ENCODE measurements at regions of chr6 and their contacts with region 1.

Region 1: DNA sequence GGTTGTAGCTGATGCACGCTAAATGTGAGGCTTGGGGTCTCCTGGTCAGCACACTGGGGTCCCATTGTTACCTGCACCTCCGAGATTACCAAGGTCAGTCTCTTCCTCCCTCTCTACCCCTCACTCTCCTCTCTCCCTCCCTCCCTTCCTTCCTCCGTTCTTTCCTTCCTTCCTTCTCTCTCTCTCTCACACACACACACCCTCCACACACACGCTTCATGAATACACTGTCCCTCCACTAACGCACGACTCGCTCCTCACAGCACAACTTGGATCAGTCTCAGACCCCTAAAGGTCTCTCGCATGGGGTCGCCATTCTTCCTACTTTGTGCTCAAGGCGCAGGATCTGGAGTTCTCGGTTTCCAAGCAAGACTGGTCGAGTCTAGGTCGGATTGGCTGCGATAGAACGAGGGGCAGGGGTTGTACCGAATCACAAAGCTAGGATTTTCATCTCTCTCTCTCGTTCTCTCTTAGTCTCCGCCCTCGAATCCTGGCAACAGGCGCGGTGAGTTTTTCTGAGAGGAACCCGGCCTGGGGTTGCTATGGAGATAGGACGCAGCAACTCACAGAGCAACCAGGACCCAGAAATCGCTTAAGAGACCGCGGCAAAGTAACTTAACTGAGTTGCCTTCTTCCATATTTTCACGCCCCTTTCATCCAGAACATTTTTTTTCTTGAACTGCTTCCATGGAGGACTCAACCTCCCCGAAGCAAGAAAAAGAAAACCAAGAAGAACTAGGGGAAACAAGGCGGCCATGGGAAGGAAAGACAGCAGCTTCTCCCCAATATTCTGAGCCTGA is at the start of gene RSPH4A:
- H3K4me3 ChIP-seq: peak within 1 kb of the TSS; percentile 87
- H3K27ac ChIP-seq: no peak within 1 kb of the TSS; the same call in 1 of the 2 replicates
- H3K4me1 ChIP-seq: no peaks in the 10 kb centered on the region
- CTCF ChIP-seq: peak; percentile 97

Region 2: DNA sequence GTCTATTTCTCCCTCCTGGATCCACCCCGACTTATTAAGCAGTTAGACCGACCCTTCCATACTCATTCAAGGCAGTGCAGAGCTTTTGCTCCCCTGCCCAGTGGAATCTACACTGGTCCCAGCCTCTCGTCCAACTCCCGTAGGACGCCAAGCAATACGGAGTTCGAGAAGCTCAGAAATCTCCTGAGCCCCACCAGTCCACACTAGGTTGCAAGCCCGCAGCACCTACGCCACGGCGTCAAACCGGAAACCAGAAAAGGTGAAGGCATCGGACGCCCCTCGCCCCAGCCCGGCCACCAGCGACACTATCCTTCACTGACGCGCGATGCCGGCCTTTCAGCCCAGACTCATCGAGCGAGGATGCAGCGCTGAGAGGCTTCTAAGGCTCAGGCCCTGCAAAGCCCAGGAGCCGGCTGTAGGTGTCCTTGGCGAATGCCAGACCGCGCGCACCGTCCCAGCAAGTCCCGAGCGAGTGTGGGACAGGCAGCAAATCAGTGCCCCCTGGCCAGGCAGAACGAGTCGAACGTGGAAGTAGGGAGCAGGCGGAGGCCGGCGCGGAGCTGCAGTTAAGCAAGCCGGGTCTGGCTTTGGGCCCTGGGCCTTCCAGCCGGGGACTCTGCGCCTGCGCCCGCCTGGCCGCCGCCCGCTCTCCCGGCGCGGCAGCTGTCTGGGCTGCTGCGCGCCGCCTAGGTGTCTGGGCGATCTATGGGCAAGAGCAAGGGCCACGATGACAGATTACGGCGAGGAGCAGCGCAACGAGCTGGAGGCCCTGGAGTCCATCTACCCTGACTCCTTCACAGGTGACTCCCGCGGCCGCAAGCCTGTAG is 45.1 kb before region 1 on chr6 and contains the start of gene RWDD1:
- CTCF ChIA-PET with region 1: no interaction called
- POLR2A ChIA-PET with region 1: interaction called, 11 read pairs
- H3K4me3 ChIP-seq: peak within 1 kb of the TSS; percentile 96
- H3K27ac ChIP-seq: peak within 1 kb of the TSS; percentile 85
- H3K4me1 ChIP-seq: peaks cover 2% of the 10 kb centered on the region; the same call in 1 of the 2 replicates
- CTCF ChIP-seq: peak; percentile 40; the same call in 1 of the 2 replicates

Region 3: GRCh38 chr6:116812051-116812650 is 196.0 kb after region 1 on chr6:
- CTCF ChIA-PET with region 1: no interaction called
- POLR2A ChIA-PET with region 1: no interaction called
- H3K4me3 ChIP-seq: no peak overlapping the region
- H3K27ac ChIP-seq: no peak overlapping the region
- H3K4me1 ChIP-seq: no peaks in the 10 kb centered on the region
- CTCF ChIP-seq: no peak